Caco-2 (cell line): ENCODE measurements at regions of chr12 and their contacts with region 1.

Region 1: GRCh38 chr12:111451649-111452129 is 46.0 kb downstream of the SH2B3 start:
- DNase-seq: peak in 1 of 2 experiments; percentile 50
- H3K4me3 ChIP-seq: no peak overlapping the region
- H3K4me3 Mint-ChIP-seq: no peak overlapping the region
- H3K27ac Mint-ChIP-seq: no peak overlapping the region
- H3K4me1 ChIP-seq: no peaks in the 10 kb centered on the region
- H3K4me1 Mint-ChIP-seq: no peaks in the 10 kb centered on the region
- H3K27me3 ChIP-seq: no peaks in the 10 kb centered on the region
- H3K27me3 Mint-ChIP-seq: no peaks in the 10 kb centered on the region
- CTCF ChIP-seq: peak; percentile 70 to 75

Region 2: DNA sequence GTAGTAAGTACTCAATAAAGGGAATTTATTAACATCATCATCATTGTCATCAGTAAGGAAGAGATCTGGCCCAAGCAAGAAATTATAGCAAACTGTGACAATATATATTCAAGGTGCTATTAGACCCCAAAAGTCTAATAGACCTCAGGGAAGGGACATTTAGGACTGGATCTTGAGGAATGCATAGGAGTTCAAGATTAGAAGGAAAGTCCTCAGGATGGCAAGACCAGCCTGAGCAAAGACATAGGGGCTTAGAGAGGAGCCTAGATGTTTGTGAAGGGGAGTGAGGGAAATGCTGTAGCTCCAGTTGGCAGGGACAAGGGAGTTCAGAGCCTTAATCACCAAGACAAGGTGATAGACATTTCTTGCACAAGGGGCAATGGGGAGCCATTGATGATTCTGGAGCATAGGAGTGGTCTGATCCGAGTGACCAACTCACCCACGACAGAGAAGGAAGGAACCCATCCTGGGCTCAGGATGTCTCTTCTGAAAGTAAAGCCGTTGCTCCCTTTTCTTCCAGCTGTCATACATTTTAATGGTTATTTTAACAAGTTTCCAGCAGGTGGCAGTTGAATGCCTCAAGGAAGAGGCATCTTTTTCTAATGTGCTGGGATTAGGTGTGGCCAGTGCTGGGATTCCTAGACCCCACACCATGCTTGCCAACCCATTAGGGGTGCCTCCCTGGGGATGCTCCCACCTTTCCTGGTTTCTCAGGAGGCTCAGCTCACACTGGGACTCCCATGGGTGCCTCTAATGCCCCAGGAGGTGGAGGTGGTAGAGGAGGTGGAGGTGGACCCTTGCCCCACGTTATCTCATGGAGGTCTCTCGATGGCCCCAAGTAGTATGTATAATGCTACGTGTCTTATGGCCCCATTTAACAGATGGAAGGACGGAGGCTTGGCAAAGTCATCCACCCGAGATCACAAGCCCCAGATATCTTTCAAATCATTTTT is 120.6 kb before region 1 on chr12:
- CTCF ChIA-PET with region 1: interaction called, 10 read pairs
- POLR2A ChIA-PET with region 1: no interaction called
- intact Hi-C with region 1: loop called (anchors 2 kb)
- DNase-seq: peak in 1 of 2 experiments; percentile 49
- H3K4me3 ChIP-seq: no peak overlapping the region
- H3K4me3 Mint-ChIP-seq: no peak overlapping the region
- H3K27ac Mint-ChIP-seq: no peak overlapping the region
- H3K4me1 ChIP-seq: no peaks in the 10 kb centered on the region
- H3K4me1 Mint-ChIP-seq: no peaks in the 10 kb centered on the region
- H3K27me3 ChIP-seq: no peaks in the 10 kb centered on the region
- H3K27me3 Mint-ChIP-seq: no peaks in the 10 kb centered on the region
- CTCF ChIP-seq: peak; percentile 52 to 59

Region 3: DNA sequence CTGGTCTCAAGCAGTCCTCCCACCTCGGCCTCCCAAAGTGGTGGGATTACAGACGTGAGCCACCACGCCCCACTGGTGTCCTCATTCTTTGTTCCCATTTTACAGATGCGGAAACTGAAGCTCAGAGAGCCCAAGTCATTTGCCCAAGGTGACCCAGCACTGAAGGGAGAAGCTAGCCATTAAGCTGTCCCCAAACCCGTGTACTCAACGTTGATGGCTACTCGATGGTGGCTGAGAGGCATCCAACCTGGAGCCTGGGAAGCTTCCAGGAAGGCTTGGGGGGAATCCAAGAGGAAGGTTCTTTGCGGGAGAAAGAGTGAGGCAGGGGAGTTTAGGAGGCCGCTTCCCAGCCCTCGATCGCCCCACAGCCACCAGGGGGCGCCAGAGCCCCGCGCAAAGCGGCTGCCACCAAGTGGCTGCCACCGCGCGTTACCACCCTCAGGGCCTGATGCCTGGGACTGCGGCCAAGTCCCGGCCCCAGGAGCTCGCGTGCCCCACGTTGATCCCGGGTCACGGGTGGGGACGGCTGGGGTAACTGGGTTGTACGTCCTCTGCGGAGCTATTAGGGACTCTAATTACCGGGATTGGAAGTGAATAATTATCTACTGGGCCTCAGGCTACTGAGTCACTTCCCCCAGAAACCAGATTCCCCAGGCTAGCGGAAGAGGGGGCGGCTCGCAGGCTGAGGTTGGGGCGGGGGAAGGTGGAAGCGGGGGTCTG is 54.8 kb before region 1 on chr12:
- CTCF ChIA-PET with region 1: interaction called, 32 read pairs
- POLR2A ChIA-PET with region 1: no interaction called
- intact Hi-C with region 1: loop called (anchors 1 kb)
- DNase-seq: peak; percentile 75 to 91
- H3K4me3 ChIP-seq: no peak overlapping the region
- H3K4me3 Mint-ChIP-seq: no peak overlapping the region
- H3K27ac Mint-ChIP-seq: peak overlapping the region; percentile 35
- H3K4me1 ChIP-seq: no peaks in the 10 kb centered on the region
- H3K4me1 Mint-ChIP-seq: no peaks in the 10 kb centered on the region
- H3K27me3 ChIP-seq: no peaks in the 10 kb centered on the region
- H3K27me3 Mint-ChIP-seq: no peaks in the 10 kb centered on the region
- CTCF ChIP-seq: peak; percentile 99 to 100

Region 4: GRCh38 chr12:111405149-111405860 is 46.4 kb before region 1 on chr12:
- CTCF ChIA-PET with region 1: interaction called, 12 read pairs
- POLR2A ChIA-PET with region 1: no interaction called
- intact Hi-C with region 1: loop called (anchors 2 kb)
- DNase-seq: peak; percentile 98 to 99
- H3K4me3 ChIP-seq: peak overlapping the region; percentile 77
- H3K4me3 Mint-ChIP-seq: peak overlapping the region; percentile 82
- H3K27ac Mint-ChIP-seq: peak overlapping the region; percentile 89
- H3K4me1 ChIP-seq: peaks cover 14% of the 10 kb centered on the region
- H3K4me1 Mint-ChIP-seq: peaks cover 11% of the 10 kb centered on the region
- H3K27me3 ChIP-seq: no peaks in the 10 kb centered on the region
- H3K27me3 Mint-ChIP-seq: no peaks in the 10 kb centered on the region
- CTCF ChIP-seq: peak; percentile 64 to 76

Region 5: DNA sequence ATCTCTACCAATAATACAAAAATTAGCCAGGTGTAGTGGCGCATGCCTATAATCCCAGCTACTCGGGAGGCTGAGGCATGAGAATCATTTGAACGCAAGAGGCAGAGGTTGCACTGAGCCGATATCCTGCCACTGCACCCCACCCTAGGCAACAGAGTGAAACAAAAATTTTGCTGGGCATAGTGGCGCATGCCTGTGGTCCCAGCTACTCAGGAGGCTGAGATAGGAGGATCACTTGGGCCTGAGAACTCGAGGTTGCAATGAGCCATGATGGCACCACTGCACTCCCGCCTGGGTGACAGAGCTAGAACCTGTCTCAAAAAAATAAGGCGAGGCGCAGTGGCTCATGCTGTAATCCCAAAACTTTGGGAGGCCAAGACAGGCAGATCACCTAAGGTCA is 137.9 kb after region 1 on chr12:
- CTCF ChIA-PET with region 1: no interaction called
- POLR2A ChIA-PET with region 1: no interaction called
- intact Hi-C with region 1: no loop called
- DNase-seq: no peak
- H3K4me3 ChIP-seq: no peak overlapping the region
- H3K4me3 Mint-ChIP-seq: no peak overlapping the region
- H3K27ac Mint-ChIP-seq: no peak overlapping the region
- H3K4me1 ChIP-seq: peaks cover 2% of the 10 kb centered on the region; the same call in 1 of the 2 replicates
- H3K4me1 Mint-ChIP-seq: peaks cover 7% of the 10 kb centered on the region
- H3K27me3 ChIP-seq: no peaks in the 10 kb centered on the region
- H3K27me3 Mint-ChIP-seq: no peaks in the 10 kb centered on the region
- CTCF ChIP-seq: no peak

Region 6: GRCh38 chr12:111656016-111656415 is 204.3 kb after region 1 on chr12:
- CTCF ChIA-PET with region 1: no interaction called
- POLR2A ChIA-PET with region 1: no interaction called
- intact Hi-C with region 1: no loop called
- DNase-seq: no peak
- H3K4me3 ChIP-seq: no peak overlapping the region
- H3K4me3 Mint-ChIP-seq: no peak overlapping the region
- H3K27ac Mint-ChIP-seq: no peak overlapping the region
- H3K4me1 ChIP-seq: no peaks in the 10 kb centered on the region
- H3K4me1 Mint-ChIP-seq: no peaks in the 10 kb centered on the region
- H3K27me3 ChIP-seq: no peaks in the 10 kb centered on the region
- H3K27me3 Mint-ChIP-seq: no peaks in the 10 kb centered on the region
- CTCF ChIP-seq: no peak